ENCODE measurements at regions of chr4 and their contacts with region 1.

Region 1: DNA sequence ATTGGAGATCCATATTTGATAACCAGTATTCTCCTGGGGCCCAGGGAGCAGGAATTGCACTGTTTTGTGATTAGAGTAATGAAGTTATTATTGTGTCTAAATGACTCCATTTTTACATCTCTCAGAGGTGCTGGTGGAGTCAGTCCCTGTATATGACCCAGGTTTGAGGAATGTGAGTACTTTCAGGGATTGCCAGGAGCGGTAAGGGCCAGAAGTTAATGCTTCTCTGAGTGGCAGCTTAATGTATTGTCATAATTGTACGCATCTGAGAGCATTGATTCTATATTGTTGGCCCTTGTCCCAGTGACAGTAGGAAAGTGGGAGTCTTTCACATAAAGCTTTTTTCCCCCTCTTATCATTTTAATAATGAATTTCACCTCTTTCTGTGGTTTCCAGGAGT is 146.2 kb downstream of the GATB start:
- DNase-seq: no peak
- H3K4me3 ChIP-seq: no peak overlapping the region
- CTCF ChIP-seq: no peak

Region 2: GRCh38 chr4:151604238-151604637 is 10.3 kb before region 1 on chr4:
- CTCF ChIA-PET with region 1: interaction called, 19 read pairs
- POLR2A ChIA-PET with region 1: no interaction called
- DNase-seq: no peak
- H3K4me3 ChIP-seq: no peak overlapping the region
- CTCF ChIP-seq: peak; percentile 33